Activated naive CD4-positive, alpha-beta T cell treated with anti-CD3 and anti-CD28 coated beads for 36 hours (primary cell): ENCODE measurements at regions of chr1 and their contacts with region 1.

Region 1: DNA sequence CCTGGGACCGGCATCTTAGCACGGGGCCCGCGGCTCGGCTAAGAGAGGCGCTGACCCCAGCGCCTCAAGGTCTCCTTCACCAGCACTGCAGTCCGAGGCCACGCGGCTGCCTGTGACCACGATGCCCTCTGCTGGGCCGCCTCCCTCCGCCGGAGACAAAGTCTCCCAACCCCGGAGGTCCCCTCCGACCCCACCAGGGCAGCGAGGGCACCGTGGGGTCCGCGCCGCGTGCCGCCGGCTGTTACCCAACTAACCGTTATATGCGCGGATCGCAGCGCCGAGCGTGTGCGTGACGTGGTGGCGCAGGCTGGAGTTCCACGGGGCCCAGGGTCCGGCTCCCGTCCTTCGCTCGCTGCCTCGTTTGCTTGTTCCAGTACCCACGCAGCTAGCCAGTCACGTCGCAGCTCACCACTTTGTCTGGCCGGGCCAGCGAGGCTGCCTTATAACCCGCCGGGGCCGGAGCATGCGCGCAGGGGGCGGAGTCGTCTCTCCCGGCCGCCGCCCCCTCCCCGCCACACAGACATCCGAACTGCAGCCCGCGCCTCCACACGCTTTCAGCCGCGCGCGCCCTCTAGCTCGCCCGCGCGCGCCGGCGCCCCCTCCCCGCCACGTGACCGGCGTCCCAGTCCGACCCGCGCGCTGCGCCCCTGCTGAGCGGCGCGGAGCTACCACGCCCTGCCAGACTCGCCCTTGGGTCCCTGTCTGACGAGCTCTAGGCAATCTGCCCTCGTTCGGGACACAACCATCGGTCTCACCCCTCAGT is at the start of gene SLC16A1:
- DNase-seq: peak; percentile 87
- H3K4me3 Mint-ChIP-seq: peak within 1 kb of the TSS; percentile 95
- H3K27ac Mint-ChIP-seq: peak within 1 kb of the TSS; percentile 97
- H3K4me1 Mint-ChIP-seq: peaks cover 61% of the 10 kb centered on the region
- H3K27me3 Mint-ChIP-seq: no peaks in the 10 kb centered on the region
- total RNA-seq, gene SLC16A1: 56.3 to 57.5 TPM

Region 2: DNA sequence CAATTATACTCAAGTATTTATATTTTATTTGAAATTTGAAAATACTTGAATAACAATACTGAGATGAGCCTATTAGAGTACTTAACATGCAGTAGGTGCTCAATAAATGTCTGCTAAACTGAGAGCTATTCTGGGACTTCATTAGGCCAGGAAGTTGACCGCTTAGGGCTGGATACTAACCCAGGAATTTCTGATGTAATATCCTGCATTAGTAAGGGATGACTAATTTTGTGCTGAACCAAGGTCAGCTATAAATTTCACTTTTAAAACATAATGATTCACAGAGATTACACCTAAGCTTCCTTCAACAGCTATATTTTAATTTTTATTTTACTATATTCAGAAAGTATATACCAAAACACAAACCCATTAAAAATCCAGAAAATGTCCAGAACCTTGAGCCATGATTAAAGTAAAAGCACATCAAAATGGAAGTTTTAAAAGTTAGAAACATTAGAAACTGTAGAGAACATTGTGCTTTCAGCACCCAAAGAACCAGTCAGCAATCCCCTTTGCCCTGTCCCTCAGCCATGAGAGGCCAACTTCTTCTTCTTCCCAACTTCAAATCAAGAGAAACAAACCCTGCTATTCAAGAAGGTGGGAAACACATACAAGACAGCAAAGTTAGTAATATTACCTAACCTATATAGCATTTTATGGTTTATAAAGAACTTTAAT is 411.8 kb before region 1 on chr1:
- CTCF ChIA-PET with region 1: no interaction called
- intact Hi-C with region 1: no loop called
- DNase-seq: no peak
- H3K4me3 Mint-ChIP-seq: no peak overlapping the region
- H3K27ac Mint-ChIP-seq: no peak overlapping the region
- H3K4me1 Mint-ChIP-seq: peaks cover 2% of the 10 kb centered on the region
- H3K27me3 Mint-ChIP-seq: no peaks in the 10 kb centered on the region

Region 3: GRCh38 chr1:112666946-112667345 is 289.0 kb before region 1 on chr1:
- CTCF ChIA-PET with region 1: no interaction called
- intact Hi-C with region 1: loop called (anchors 5 kb)
- DNase-seq: no peak
- H3K4me3 Mint-ChIP-seq: no peak overlapping the region
- H3K27ac Mint-ChIP-seq: peak overlapping the region; percentile 67
- H3K4me1 Mint-ChIP-seq: peaks cover 33% of the 10 kb centered on the region
- H3K27me3 Mint-ChIP-seq: no peaks in the 10 kb centered on the region

Region 4: DNA sequence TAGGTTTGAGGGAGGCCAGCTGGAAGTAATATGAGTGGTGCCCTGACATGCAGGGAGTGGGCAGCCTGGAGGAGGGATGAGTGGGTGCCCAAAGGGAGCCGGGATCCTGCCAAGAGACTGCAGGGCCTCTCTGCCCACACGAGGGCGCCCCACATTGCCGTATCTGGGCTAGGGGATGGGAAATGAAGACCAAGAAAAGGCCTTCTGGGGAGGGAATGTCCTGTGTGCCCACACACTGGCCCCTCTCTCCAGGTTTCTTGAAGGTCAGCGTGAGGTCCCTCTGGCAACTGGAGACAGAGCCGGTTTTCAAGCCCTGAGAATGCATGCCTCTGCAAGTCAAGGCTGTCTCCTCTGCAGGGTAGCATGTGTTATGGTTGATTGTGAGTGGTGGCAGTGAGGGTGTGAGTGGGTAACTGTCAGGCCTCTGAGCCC is 146.7 kb before region 1 on chr1:
- CTCF ChIA-PET with region 1: no interaction called
- intact Hi-C with region 1: loop called (anchors 2 kb)
- DNase-seq: peak; percentile 85
- H3K4me3 Mint-ChIP-seq: no peak overlapping the region
- H3K27ac Mint-ChIP-seq: no peak overlapping the region
- H3K4me1 Mint-ChIP-seq: no peaks in the 10 kb centered on the region
- H3K27me3 Mint-ChIP-seq: peaks cover 2% of the 10 kb centered on the region

Region 5: GRCh38 chr1:112935461-112936289 is 20.3 kb before region 1 on chr1:
- CTCF ChIA-PET with region 1: interaction called, 10 read pairs
- intact Hi-C with region 1: loop called (anchors 1 kb)
- DNase-seq: no peak
- H3K4me3 Mint-ChIP-seq: peak overlapping the region; percentile 32
- H3K27ac Mint-ChIP-seq: peak overlapping the region; percentile 83
- H3K4me1 Mint-ChIP-seq: peaks cover 45% of the 10 kb centered on the region
- H3K27me3 Mint-ChIP-seq: no peaks in the 10 kb centered on the region

Region 6: GRCh38 chr1:113389953-113390834 is 434.2 kb after region 1 on chr1 and contains the start of gene MAGI3:
- CTCF ChIA-PET with region 1: no interaction called
- intact Hi-C with region 1: loop called (anchors 1 kb)
- DNase-seq: peak; percentile 97
- H3K4me3 Mint-ChIP-seq: peak within 1 kb of the TSS; percentile 83
- H3K27ac Mint-ChIP-seq: peak within 1 kb of the TSS; percentile 48
- H3K4me1 Mint-ChIP-seq: peaks cover 20% of the 10 kb centered on the region
- H3K27me3 Mint-ChIP-seq: no peaks in the 10 kb centered on the region
- total RNA-seq, gene MAGI3: 5.9 to 6.4 TPM

Region 7: GRCh38 chr1:113904674-113905434 is 948.9 kb after region 1 on chr1 and contains the starts of genes AP4B1 and DCLRE1B:
- CTCF ChIA-PET with region 1: no interaction called
- intact Hi-C with region 1: loop called (anchors 2 kb)
- DNase-seq: peak; percentile 99
- H3K4me3 Mint-ChIP-seq: peak within 1 kb of the TSS; percentile 99
- H3K27ac Mint-ChIP-seq: peak within 1 kb of the TSS; percentile 97
- H3K4me1 Mint-ChIP-seq: peaks cover 51% of the 10 kb centered on the region
- H3K27me3 Mint-ChIP-seq: no peaks in the 10 kb centered on the region
- total RNA-seq, gene AP4B1: 35.7 to 40.2 TPM
- total RNA-seq, gene DCLRE1B: 17.7 to 18.3 TPM